ENCODE measurements at regions of chr12 and their contacts with region 1.

Region 1: DNA sequence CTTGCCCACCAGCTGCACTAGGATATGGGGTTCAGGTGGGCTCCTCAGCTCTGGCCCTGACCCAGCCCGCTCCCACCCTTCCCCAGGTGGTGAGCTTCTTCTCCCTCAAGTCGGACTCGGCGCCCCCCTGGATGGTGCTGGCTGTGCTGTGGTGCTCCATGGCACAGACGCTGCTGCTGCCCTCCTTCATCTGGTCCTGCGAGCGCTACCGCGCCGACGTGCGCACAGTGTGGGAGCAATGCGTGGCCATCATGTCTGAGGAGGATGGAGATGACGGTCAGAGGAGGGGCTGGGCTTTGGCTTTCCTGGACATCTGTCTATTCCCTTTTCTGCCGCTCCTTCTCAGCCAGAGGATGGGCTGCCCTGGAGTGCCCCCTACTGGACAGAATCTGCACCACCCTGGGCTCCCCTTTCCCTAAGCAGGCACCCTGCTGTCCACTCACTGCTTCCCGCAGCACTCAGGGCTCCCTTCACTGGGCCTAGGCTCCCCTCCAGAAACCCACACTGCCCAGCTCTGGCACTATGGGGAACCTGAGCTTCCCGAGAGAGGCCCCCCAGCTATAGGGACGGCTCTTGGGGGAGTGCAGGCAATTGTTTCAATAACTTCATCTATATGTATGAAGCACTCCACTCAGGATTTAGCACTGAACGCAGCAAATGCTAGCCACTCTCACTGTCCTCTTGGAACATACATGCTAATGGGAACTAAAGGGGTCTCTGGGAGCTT is 2.6 kb upstream of the P3H3 start:
- DNase-seq: peak; percentile 92
- H3K4me3 Mint-ChIP-seq: no peak overlapping the region
- H3K27ac Mint-ChIP-seq: no peak overlapping the region
- H3K4me1 Mint-ChIP-seq: peaks cover 28% of the 10 kb centered on the region
- H3K27me3 Mint-ChIP-seq: peaks cover 19% of the 10 kb centered on the region

Region 2: GRCh38 chr12:6613776-6614512 is 211.6 kb before region 1 on chr12:
- CTCF ChIA-PET with region 1: interaction called, 3 read pairs
- intact Hi-C with region 1: loop called (anchors 1 kb)
- DNase-seq: peak; percentile 32
- H3K4me3 Mint-ChIP-seq: no peak overlapping the region
- H3K27ac Mint-ChIP-seq: no peak overlapping the region
- H3K4me1 Mint-ChIP-seq: peaks cover 39% of the 10 kb centered on the region
- H3K27me3 Mint-ChIP-seq: no peaks in the 10 kb centered on the region

Region 3: GRCh38 chr12:6735448-6736191 is 89.9 kb before region 1 on chr12:
- CTCF ChIA-PET with region 1: interaction called, 6 read pairs
- intact Hi-C with region 1: loop called (anchors 1 kb)
- DNase-seq: peak; percentile 72
- H3K4me3 Mint-ChIP-seq: no peak overlapping the region
- H3K27ac Mint-ChIP-seq: peak overlapping the region; percentile 53
- H3K4me1 Mint-ChIP-seq: peaks cover 6% of the 10 kb centered on the region
- H3K27me3 Mint-ChIP-seq: no peaks in the 10 kb centered on the region

Region 4: GRCh38 chr12:6778574-6779550 is 46.7 kb before region 1 on chr12:
- CTCF ChIA-PET with region 1: interaction called, 33 read pairs
- intact Hi-C with region 1: loop called (anchors 1 kb)
- DNase-seq: peak; percentile 96
- H3K4me3 Mint-ChIP-seq: peak overlapping the region; percentile 82
- H3K27ac Mint-ChIP-seq: peak overlapping the region; percentile 63
- H3K4me1 Mint-ChIP-seq: peaks cover 89% of the 10 kb centered on the region
- H3K27me3 Mint-ChIP-seq: no peaks in the 10 kb centered on the region

Region 5: DNA sequence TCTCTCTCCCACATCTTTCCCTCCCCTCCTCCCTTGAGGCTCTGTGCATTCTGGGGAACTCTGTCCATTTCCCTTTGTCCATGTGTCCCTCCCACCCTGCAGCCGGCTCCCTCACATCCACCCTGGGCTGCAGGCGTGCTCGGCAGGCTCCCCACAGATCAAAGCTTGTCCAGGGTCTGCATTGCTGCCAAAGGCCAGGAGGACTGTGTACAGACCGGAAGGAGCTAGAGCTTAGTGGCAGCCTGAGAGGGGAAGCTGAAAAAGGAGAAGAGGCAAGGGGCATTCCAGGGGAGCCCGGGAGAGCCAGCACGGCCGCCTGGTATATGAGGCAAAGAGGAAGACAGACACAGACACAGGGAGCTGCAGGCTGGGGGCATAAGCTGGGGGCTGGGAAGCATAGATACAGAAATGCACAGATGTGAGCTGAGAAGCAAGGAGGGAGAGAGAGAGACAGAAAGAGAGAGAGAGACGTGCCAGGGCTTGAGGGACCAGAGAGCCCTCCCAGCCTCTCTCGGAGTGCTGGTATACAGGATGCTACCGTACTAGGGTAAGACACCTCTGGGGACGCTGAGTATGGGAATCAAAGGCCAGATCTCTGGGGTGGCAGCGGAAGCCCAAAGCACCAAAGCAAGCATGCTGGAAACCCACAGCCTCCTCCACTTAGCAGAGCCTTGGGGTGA is 32.9 kb before region 1 on chr12:
- CTCF ChIA-PET with region 1: interaction called, 23 read pairs
- intact Hi-C with region 1: loop called (anchors 1 kb)
- DNase-seq: peak; percentile 61
- H3K4me3 Mint-ChIP-seq: peak overlapping the region; percentile 97
- H3K27ac Mint-ChIP-seq: peak overlapping the region; percentile 96
- H3K4me1 Mint-ChIP-seq: peaks cover 51% of the 10 kb centered on the region
- H3K27me3 Mint-ChIP-seq: no peaks in the 10 kb centered on the region

Region 6: DNA sequence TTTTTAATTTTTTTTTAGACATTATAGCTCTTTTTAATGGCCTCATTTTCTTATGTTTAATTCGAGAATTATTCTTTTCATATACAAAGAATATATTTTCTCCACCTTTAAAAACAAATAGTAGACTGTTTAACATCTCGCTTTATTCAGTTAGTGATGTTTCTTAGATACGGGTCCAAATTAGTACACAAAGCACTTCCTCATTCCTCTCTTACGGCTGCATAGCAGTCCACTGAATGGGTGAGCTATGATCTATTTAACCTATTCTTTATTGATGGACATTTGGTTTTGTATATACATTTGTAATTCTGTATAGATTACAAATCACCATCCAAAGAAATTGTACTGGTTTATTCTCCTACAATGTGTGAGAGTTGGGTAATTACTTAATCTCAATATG is 12.2 kb before region 1 on chr12:
- CTCF ChIA-PET with region 1: interaction called, 18 read pairs
- intact Hi-C with region 1: no loop called
- DNase-seq: no peak
- H3K4me3 Mint-ChIP-seq: no peak overlapping the region
- H3K27ac Mint-ChIP-seq: no peak overlapping the region
- H3K4me1 Mint-ChIP-seq: peaks cover 17% of the 10 kb centered on the region
- H3K27me3 Mint-ChIP-seq: no peaks in the 10 kb centered on the region

Region 7: GRCh38 chr12:7210642-7211151 is 385.1 kb after region 1 on chr12:
- CTCF ChIA-PET with region 1: no interaction called
- intact Hi-C with region 1: no loop called
- DNase-seq: no peak
- H3K4me3 Mint-ChIP-seq: no peak overlapping the region
- H3K27ac Mint-ChIP-seq: no peak overlapping the region
- H3K4me1 Mint-ChIP-seq: no peaks in the 10 kb centered on the region
- H3K27me3 Mint-ChIP-seq: no peaks in the 10 kb centered on the region